A549 (cell line): ENCODE measurements at regions of chr12 and their contacts with region 1.

Region 1: DNA sequence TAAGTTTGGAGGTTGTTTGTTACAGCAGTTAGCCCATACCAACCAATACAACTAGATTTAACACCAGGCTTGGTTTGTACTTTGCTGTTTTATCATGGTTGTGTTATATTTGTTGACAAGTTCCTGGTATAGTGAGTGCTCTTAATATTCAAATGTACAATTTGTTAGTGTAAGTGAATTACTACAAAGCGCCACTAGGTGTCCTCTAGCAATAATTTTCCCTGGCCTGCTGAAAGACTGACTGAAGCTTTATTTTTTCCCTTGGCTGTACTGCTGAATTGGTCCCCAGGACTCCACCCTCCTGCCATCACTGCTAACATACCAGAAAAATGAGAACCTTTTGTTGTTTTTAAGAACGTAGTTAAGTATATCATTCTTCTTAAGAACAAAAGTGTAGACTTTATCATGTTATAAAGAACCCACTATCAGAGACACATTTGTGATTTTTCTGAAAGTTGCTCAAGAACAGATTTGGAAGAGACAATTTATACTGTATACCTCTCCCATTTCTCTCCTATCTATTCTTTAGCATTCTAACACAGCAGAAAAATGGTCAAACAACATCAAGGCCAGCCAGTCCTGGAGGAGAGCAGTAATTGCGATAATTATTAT is 75.3 kb upstream of the FAR2 start:
- DNase-seq: peak in 1 of 2 experiments; percentile 51
- ATAC-seq: peak; percentile 62 to 80; a peak in 5 of 6 replicates
- H3K4me3 ChIP-seq: no peak overlapping the region
- H3K27ac ChIP-seq: no peak overlapping the region
- H3K4me1 ChIP-seq: no peaks in the 10 kb centered on the region
- CTCF ChIP-seq: peak; percentile 58
- EP300 ChIP-seq: no peak
- POLR2A ChIP-seq: no peak
- RAD21 ChIP-seq: peak; percentile 39 to 65; a peak in 3 of 5 replicates

Region 2: GRCh38 chr12:29086325-29087271 is 12.9 kb after region 1 on chr12:
- CTCF ChIA-PET with region 1: interaction called, 13 read pairs
- POLR2A ChIA-PET with region 1: no interaction called
- DNase-seq: no peak
- ATAC-seq: 0 out of 6 replicates have a peak, but pooled peaks of 1 of the 2 experiments have one; percentile 34
- H3K4me3 ChIP-seq: no peak overlapping the region
- H3K27ac ChIP-seq: no peak overlapping the region
- H3K4me1 ChIP-seq: no peaks in the 10 kb centered on the region
- CTCF ChIP-seq: no peak
- EP300 ChIP-seq: no peak
- POLR2A ChIP-seq: no peak
- RAD21 ChIP-seq: no peak